Dorsolateral prefrontal cortex (tissue), 120 donors: ENCODE measurements at regions of chr3 and their contacts with region 1.

Region 1: GRCh38 chr3:179147873-179148615 is at the start of gene PIK3CA:
- DNase-seq: peak; percentile 89 to 98 (median 96)
- H3K4me3 ChIP-seq: peak within 1 kb of the TSS; percentile 61 to 99 (median 93)
- H3K27ac ChIP-seq: peak within 1 kb of the TSS; percentile 83 to 99 (median 97)
- H3K27me3 ChIP-seq: no peaks in the 10 kb centered on the region
- CTCF ChIP-seq: peak in 5 of 56 donors; percentile 3 to 13 (median 7)
- total RNA-seq, gene PIK3CA: 25.8 to 58.1 (median 42.6) TPM

Region 2: GRCh38 chr3:178736300-178736699 is 411.7 kb before region 1 on chr3:
- intact Hi-C with region 1: no loop called
- DNase-seq: no peak
- H3K4me3 ChIP-seq: no peak overlapping the region
- H3K27ac ChIP-seq: no peak overlapping the region
- H3K27me3 ChIP-seq: no peaks in the 10 kb centered on the region
- CTCF ChIP-seq: no peak

Region 3: DNA sequence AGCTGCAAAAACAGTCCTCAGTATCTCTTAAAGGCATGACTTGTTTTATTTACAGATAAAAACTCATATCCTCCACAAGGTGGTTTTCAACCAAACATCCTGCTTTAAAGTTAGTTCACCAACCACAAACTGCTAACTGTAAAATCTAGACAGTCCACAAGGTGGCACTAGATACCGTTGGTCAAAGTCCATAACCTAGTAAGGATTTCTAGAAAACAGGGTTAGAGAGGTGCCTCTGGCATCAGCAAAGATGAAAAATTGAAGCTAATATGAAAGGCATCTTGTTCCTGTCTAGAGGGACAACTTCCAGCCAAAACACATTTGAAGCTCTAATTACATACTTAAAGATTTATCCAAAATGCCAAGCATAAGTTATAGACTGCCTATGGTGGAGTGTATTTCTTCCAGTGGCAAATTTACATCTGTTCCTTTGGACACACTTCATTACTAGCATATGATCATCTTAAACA is 132.5 kb before region 1 on chr3:
- intact Hi-C with region 1: loop called (anchors 5 kb)
- DNase-seq: peak in 2 of 10 donors; percentile 31 to 43
- H3K4me3 ChIP-seq: no peak overlapping the region
- H3K27ac ChIP-seq: peak overlapping the region in 3 of 59 donors; percentile 9 to 48 (median 11)
- H3K27me3 ChIP-seq: no peaks in the 10 kb centered on the region
- CTCF ChIP-seq: peak; percentile 78 to 98 (median 92)

Region 4: DNA sequence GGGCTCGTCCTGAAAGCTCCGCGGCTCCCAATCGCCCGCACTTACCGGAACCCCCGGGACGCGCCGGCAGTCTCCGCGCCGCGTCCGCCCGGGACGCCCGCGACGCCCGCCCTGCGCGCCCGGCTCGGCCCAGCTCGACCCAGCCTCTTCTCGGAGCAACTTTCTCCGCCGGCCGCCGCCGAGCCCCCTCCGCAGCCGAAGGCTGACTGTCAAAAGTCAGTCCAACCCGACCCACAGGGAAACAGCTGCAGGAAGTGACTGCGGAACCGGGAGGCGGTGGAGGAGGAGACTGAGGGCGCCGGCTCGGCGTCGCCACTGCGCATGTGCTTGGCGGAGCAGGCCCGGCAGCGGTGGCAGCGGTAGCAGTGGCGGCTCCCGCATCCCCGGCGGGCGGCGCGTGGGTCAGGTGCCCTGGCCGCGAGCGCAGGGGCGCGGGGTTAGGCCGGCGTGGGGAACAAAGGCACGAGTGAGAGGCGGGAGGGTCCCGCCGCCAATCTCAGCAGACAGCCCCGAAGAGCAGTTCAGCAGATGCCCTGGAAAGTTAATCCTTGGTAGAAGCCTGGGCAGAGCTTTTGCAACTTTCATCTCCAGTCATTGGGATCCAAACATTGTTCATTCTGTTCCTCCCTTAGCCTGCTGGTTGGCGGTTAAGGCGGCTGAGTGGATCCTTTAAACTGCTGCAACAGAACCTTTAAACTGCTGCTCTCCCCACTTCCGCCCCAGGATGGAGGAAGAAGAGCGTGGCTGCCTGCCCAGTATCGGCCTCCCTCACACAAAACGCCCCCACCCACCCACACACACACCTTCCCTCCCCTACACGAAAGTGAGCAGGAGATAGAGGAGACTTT is 76.3 kb before region 1 on chr3 and contains the start of gene ZMAT3:
- intact Hi-C with region 1: loop called (anchors 1 to 5 kb)
- DNase-seq: peak; percentile 76 to 95 (median 86)
- H3K4me3 ChIP-seq: peak within 1 kb of the TSS; percentile 55 to 98 (median 86)
- H3K27ac ChIP-seq: peak within 1 kb of the TSS; percentile 11 to 96 (median 89)
- H3K27me3 ChIP-seq: no peaks in the 10 kb centered on the region
- CTCF ChIP-seq: peak in 32 of 56 donors; percentile 4 to 54 (median 33)
- total RNA-seq, gene ZMAT3: 40.9 to 107 (median 77.8) TPM

Region 5: DNA sequence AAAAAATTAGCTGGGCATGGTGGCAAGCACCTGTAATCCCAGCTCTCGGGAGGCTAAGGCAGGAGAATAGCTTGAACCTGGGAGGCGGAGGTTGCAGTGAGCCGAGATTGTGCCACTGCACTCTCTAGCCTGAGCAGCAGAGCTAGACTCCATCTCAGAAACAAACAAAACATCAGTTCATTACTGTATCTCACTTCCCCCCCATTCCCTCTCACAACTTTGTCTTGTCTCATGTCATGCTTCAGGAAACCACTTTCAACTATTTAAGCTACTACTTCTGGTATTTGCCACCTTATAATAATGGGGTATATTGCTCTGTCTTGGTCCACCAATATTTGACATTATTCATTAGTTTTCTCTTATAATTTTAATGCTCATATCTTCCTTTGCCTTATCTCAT is 26.3 kb after region 1 on chr3:
- intact Hi-C with region 1: no loop called
- DNase-seq: no peak
- H3K4me3 ChIP-seq: no peak overlapping the region
- H3K27ac ChIP-seq: no peak overlapping the region
- H3K27me3 ChIP-seq: no peaks in the 10 kb centered on the region
- CTCF ChIP-seq: no peak

Region 6: DNA sequence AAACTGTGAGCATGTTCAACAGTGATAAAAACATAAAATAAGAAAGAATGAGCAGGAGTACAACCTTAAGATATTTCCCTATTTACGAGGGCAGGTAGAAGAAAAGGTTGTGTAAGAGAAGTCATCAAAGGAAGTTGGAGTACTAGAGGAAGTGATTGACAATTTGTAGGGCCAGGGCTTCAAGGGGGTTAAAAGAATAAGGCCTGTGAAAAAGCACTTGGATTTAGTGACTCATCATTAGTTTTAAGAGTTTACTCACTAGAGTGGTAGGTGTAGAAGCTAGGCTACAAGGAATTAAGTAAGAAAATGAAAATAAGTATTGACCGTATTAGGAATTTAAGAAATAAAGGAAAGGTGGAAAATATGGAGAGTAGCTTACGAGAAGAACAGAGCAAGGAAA is 79.3 kb after region 1 on chr3:
- intact Hi-C with region 1: loop called in 1 of 2 experiments (anchors 10 kb)
- DNase-seq: no peak
- H3K4me3 ChIP-seq: no peak overlapping the region
- H3K27ac ChIP-seq: no peak overlapping the region
- H3K27me3 ChIP-seq: no peaks in the 10 kb centered on the region
- CTCF ChIP-seq: no peak

Region 7: DNA sequence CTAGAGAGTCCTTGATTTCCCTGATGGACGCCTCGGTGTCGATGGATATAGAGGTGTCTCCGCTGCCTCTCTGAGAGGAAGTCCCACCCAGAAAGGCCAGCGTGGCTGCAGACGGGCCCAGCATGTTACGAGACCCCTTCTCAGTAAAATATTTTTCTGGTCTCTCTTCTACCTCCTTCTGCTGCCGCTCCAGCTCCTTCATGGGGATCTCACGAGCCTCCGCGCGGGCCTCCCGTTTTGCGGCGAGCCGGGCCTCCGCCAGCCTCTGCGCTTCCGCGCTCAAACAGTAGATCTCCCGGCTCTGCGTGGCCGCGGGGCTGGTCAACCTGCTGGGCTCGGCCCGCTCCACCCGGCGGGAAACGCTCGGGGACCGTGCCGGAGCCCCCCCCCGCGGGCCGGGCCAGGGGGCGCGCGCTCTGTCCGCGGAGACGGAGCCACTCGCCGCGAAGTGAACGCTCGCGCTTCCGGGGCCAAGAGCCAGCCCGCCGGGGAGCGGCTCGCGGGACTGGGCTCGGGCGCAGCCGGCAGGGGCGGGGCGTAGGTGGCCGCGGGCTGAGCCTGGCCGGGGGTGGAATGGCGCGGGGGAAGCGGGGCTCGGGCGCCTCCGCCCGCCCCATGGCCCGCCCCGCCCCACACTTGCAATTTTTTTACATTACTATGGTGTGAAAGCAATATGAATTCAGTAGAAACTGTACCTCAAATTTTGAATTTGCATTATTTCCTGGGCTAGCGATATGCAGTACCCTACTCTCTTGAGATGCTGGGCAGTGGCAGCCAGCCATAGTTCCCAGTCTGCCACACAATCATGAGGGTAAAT is 113.1 kb after region 1 on chr3:
- intact Hi-C with region 1: loop called in 1 of 2 experiments (anchors 5 kb)
- DNase-seq: peak; percentile 20 to 76 (median 48)
- H3K4me3 ChIP-seq: peak overlapping the region; percentile 49 to 85 (median 72)
- H3K27ac ChIP-seq: peak overlapping the region in 53 of 59 donors; percentile 16 to 90 (median 73)
- H3K27me3 ChIP-seq: no peaks in the 10 kb centered on the region
- CTCF ChIP-seq: peak in 15 of 56 donors; percentile 4 to 47 (median 29)